ENCODE measurements at regions of chr16 and their contacts with region 1.

Region 1: GRCh38 chr16:89507834-89508590 is at the start of gene SPG7:
- DNase-seq: peak; percentile 84 to 90
- ATAC-seq: peak; percentile 86 to 95 (median 91)
- H3K4me3 ChIP-seq: peak within 1 kb of the TSS; percentile 51 to 97 (median 88)
- H3K27ac ChIP-seq: peak within 1 kb of the TSS; percentile 91 to 99 (median 98)
- H3K4me1 ChIP-seq: peaks cover 20 to 53% (median 45%) of the 10 kb centered on the region in 9 donors
- H3K27me3 ChIP-seq: no peaks in the 10 kb centered on the region
- CTCF ChIP-seq: peak in 2 of 9 donors; percentile 16
- total RNA-seq, gene SPG7: 85.4 to 145 (median 101) TPM

Region 2: GRCh38 chr16:89155184-89155679 is 352.8 kb before region 1 on chr16:
- intact Hi-C with region 1: no loop called
- DNase-seq: peak; percentile 68 to 74
- ATAC-seq: peak; percentile 66 to 89 (median 78)
- H3K4me3 ChIP-seq: no peak overlapping the region
- H3K27ac ChIP-seq: peak overlapping the region in 3 of 10 donors; percentile 3 to 38 (median 4)
- H3K4me1 ChIP-seq: peaks cover 17 to 30% (median 28%) of the 10 kb centered on the region in 9 donors
- H3K27me3 ChIP-seq: peaks cover 0 to 8% (median 0%) of the 10 kb centered on the region in 7 donors
- CTCF ChIP-seq: no peak

Region 3: GRCh38 chr16:89241187-89242007 is 266.6 kb before region 1 on chr16:
- intact Hi-C with region 1: loop called in 1 of 10 experiments (anchors 5 kb)
- DNase-seq: peak; percentile 62 to 72
- ATAC-seq: peak; percentile 74 to 84 (median 80)
- H3K4me3 ChIP-seq: peak overlapping the region; percentile 7 to 91 (median 69)
- H3K27ac ChIP-seq: peak overlapping the region; percentile 77 to 99 (median 92)
- H3K4me1 ChIP-seq: peaks cover 0 to 17% (median 11%) of the 10 kb centered on the region in 9 donors
- H3K27me3 ChIP-seq: peaks cover 0 to under 1% (median 0%) of the 10 kb centered on the region in 7 donors
- CTCF ChIP-seq: no peak

Region 4: DNA sequence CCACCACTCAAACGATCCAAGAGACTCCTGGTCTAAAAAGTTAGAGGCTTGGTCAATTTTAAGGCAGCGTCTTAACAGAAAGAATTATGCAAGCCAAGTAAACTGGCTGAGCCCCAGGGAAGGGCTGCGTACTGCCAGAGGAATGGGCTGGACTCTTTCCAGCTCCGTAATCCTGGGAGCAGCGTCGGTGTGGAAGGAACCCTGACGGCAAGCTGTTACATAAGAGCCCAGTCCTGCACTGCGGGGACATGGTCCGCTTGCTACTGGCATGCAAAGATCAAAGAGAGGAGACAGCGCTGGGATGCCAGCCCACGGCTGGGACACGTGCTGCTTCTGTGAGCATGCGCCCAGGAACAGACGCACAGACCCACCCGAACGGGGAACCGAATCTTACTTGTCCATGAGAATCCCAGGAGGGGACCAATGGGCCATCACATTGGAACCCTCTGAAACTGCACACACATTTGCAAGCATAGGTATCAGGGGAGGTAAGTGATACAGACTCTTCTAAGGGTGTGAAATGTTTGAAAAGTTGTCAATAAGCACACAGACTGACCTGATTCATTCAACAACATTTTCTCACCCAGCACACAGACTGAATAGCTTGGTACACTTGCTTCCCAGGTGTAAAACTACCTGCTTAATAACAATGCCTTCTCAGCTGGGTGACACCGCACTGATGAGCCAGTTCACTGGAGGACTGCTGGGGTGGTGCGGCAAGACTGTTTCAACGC is 112.7 kb before region 1 on chr16:
- intact Hi-C with region 1: loop called in 1 of 10 experiments (anchors 5 kb)
- DNase-seq: peak; percentile 79 to 93
- ATAC-seq: peak; percentile 92 to 96 (median 95)
- H3K4me3 ChIP-seq: peak overlapping the region in 2 of 10 donors; percentile 7 to 19
- H3K27ac ChIP-seq: peak overlapping the region in 8 of 10 donors; percentile 23 to 76 (median 52)
- H3K4me1 ChIP-seq: peaks cover 22 to 57% (median 42%) of the 10 kb centered on the region in 9 donors
- H3K27me3 ChIP-seq: no peaks in the 10 kb centered on the region
- CTCF ChIP-seq: no peak

Region 5: GRCh38 chr16:89466920-89467319 is 41.1 kb before region 1 on chr16:
- intact Hi-C with region 1: no loop called
- DNase-seq: no peak
- ATAC-seq: no peak
- H3K4me3 ChIP-seq: no peak overlapping the region
- H3K27ac ChIP-seq: no peak overlapping the region
- H3K4me1 ChIP-seq: peaks cover 16 to 76% (median 51%) of the 10 kb centered on the region in 9 donors
- H3K27me3 ChIP-seq: no peaks in the 10 kb centered on the region
- CTCF ChIP-seq: no peak

Region 6: DNA sequence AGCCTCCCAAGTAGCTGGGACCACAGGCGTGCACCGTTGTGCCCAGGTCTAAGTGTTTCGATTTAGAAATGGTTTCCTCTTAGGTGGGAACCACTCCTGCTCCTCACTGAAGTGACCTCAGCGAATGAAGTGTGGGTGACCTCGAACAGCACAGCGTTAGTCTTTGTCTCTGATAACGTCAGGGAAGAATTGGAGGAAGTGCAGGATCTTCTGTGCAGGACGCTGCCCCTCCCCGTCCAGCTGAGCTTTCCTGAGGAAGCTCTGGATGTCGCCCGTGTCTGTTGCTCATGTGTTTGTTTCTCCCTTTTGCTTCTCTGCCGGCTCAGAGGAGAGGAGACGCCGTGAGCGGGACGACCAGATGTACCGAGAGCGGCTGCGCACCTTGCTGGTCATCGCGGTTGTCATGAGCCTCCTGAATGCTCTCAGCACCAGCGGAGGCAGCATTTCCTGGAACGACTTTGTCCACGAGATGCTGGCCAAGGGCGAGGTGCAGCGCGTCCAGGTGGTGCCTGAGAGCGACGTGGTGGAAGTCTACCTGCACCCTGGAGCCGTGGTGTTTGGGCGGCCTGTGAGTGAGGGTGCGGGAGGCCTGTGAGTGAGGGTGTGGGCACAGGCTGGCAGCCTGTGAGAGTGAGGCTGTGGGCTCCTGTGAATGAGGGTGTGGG is 15.8 kb after region 1 on chr16:
- intact Hi-C with region 1: loop called in 1 of 10 experiments (anchors 1 kb)
- DNase-seq: peak in 1 of 2 donors; percentile 53
- ATAC-seq: peak; percentile 29 to 86 (median 70)
- H3K4me3 ChIP-seq: peak overlapping the region in 8 of 10 donors; percentile 1 to 34 (median 16)
- H3K27ac ChIP-seq: peak overlapping the region; percentile 17 to 72 (median 62)
- H3K4me1 ChIP-seq: peaks cover 6 to 29% (median 15%) of the 10 kb centered on the region in 9 donors
- H3K27me3 ChIP-seq: no peaks in the 10 kb centered on the region
- CTCF ChIP-seq: peak in 3 of 9 donors; percentile 31 to 40 (median 36)

Region 7: GRCh38 chr16:89700100-89700648 is 192.2 kb after region 1 on chr16:
- intact Hi-C with region 1: no loop called
- DNase-seq: peak; percentile 98 to 99
- ATAC-seq: peak; percentile 73 to 92 (median 82)
- H3K4me3 ChIP-seq: peak overlapping the region; percentile 59 to 78 (median 74)
- H3K27ac ChIP-seq: peak overlapping the region; percentile 1 to 85 (median 75)
- H3K4me1 ChIP-seq: peaks cover 10 to 34% (median 26%) of the 10 kb centered on the region in 9 donors
- H3K27me3 ChIP-seq: no peaks in the 10 kb centered on the region
- CTCF ChIP-seq: peak; percentile 42 to 81 (median 69)

Region 8: DNA sequence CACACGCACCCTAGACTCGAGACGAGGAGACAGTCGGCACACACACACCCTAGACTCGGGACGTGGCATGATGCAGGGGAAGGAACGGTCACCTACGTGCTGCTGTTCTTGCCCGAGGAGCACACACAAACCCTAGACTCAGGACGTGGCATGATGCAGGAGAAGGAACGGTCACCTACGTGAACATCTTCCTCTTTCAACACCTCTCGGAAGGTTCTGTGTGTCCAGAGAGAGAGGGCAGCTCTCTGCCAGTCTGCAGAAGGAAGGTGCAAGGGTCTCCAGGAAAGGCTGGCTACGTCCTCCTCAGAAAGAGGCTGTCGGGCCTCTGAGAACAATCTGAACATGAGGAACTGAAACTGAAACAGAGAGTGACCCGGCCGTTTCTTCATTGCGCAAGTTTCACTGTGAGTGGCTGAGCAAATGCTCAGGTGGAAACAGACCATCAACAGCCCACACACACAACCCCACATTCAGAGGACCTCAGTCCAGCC is 256.7 kb after region 1 on chr16:
- intact Hi-C with region 1: loop called in 1 of 10 experiments (anchors 5 kb)
- DNase-seq: peak in 1 of 2 donors; percentile 26
- ATAC-seq: peak in 7 of 8 donors; percentile 51 to 82 (median 72)
- H3K4me3 ChIP-seq: peak overlapping the region in 3 of 10 donors; percentile 5 to 46 (median 15)
- H3K27ac ChIP-seq: peak overlapping the region in 2 of 10 donors; percentile 35 to 87
- H3K4me1 ChIP-seq: peaks cover 0 to 34% (median 0%) of the 10 kb centered on the region in 9 donors
- H3K27me3 ChIP-seq: no peaks in the 10 kb centered on the region
- CTCF ChIP-seq: no peak